ENCODE measurements at regions of chr10 and their contacts with region 1.

Region 1: DNA sequence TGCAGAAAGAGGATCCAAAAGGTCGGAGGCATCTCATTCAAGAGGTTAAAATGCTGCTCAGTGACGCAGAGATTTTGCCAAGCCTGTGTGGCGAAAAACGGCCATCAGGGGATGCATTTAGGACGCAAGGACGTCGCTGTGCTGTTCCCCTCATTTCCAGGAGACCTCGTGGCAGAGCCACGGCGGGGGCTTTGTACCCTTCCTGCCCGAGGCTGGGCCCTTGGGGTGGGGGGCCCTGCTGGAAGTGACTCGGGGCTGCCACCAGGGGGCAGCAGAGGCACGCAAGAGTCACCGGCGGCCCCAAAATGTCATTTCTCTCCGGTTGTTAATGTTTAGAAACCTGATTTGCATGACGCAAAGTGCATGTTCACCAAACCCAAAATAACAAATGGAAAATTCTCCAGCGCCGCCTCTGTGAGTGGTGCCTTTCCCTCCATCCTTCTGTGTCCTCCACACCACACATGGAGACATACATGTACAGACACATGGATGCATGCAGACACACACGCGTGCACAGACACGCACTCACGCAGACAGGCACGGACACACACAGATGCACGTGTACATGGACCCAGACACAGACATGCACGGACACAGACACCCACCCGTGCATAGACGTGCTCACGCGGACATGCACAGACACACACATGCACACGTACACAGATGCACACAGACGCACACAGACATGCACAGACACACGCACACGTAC is 51.0 kb upstream of the NKX6-2 start:
- DNase-seq: no peak
- H3K4me3 ChIP-seq: no peak overlapping the region
- H3K27ac ChIP-seq: no peak overlapping the region
- H3K4me1 ChIP-seq: no peaks in the 10 kb centered on the region
- H3K27me3 ChIP-seq: peaks cover 24% of the 10 kb centered on the region
- CTCF ChIP-seq: peak; percentile 73 to 88 (median 83)
- POLR2A ChIP-seq: no peak

Region 2: GRCh38 chr10:132958883-132959558 is 122.0 kb after region 1 on chr10:
- intact Hi-C with region 1: no loop called
- DNase-seq: no peak
- H3K4me3 ChIP-seq: no peak overlapping the region
- H3K27ac ChIP-seq: no peak overlapping the region
- H3K4me1 ChIP-seq: no peaks in the 10 kb centered on the region
- H3K27me3 ChIP-seq: peaks cover 6% of the 10 kb centered on the region
- CTCF ChIP-seq: no peak
- POLR2A ChIP-seq: no peak

Region 3: DNA sequence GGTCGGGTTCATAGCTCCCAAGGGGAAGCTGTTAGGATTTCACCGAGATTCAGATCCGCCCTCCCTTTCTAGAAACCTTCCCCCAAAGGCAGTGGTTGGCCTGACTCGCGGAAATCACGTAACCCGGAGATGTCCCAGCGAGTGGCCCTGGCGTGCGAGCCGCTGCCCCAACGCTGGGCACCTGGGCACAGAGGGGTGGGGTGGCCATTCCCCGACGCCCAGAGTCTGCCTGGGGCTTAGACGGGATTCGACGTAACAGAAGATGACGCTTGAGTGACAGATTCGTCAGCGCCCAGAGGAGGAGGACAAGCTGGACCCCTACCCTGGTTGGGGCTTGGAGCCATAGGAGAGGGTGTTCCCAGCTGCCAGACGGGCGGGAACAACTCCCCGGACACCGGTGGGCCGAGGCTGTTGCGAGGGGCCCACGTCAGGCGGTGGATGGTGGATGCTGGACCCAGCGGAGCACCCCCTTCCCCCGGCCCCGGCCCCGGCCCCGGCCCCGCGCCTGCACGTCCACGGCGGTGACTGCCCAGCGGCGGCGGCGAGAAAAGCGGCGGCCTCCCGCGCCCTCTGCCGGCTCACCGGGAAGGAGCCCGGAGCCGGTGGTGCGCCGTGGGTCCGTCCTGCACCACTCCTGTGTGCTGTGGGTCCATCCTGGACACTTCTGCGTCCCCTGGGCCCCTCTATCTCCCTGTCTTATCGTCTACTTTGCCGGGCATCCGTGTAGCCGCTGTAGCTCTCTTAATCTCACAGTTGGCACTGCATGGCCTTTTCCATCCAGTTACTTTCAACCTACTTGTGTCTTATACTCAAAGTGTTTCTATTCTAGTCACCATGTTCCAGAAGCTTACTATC is 287.6 kb after region 1 on chr10:
- intact Hi-C with region 1: loop called (anchors 10 kb)
- DNase-seq: no peak
- H3K4me3 ChIP-seq: no peak overlapping the region
- H3K27ac ChIP-seq: no peak overlapping the region
- H3K4me1 ChIP-seq: no peaks in the 10 kb centered on the region
- H3K27me3 ChIP-seq: peaks cover 3% of the 10 kb centered on the region
- CTCF ChIP-seq: peak in 3 of 4 experiments; percentile 57 to 63 (median 61)
- POLR2A ChIP-seq: no peak

Region 4: GRCh38 chr10:133318494-133319127 is 481.6 kb after region 1 on chr10:
- intact Hi-C with region 1: loop called (anchors 5 kb)
- DNase-seq: no peak
- H3K4me3 ChIP-seq: peak overlapping the region in 1 of 2 donors; percentile 24
- H3K27ac ChIP-seq: no peak overlapping the region
- H3K4me1 ChIP-seq: no peaks in the 10 kb centered on the region
- H3K27me3 ChIP-seq: no peaks in the 10 kb centered on the region
- CTCF ChIP-seq: peak; percentile 21 to 68 (median 54)
- POLR2A ChIP-seq: no peak

Measured in prostate gland (tissue), 2 donors.